Activated CD8-positive, alpha-beta T cell treated with anti-CD3 and anti-CD28 coated beads for 36 hours (primary cell): ENCODE measurements at regions of chr1 and their contacts with region 1.

Region 1: GRCh38 chr1:184881941-184882913 is 92.1 kb downstream of the NIBAN1 start:
- DNase-seq: peak; percentile 20
- ATAC-seq: peak; percentile 73
- H3K4me3 Mint-ChIP-seq: no peak overlapping the region
- H3K27ac Mint-ChIP-seq: peak overlapping the region; percentile 80
- H3K4me1 Mint-ChIP-seq: peaks cover 27% of the 10 kb centered on the region
- H3K27me3 Mint-ChIP-seq: peaks cover 4% of the 10 kb centered on the region
- CTCF ChIP-seq: no peak

Region 2: DNA sequence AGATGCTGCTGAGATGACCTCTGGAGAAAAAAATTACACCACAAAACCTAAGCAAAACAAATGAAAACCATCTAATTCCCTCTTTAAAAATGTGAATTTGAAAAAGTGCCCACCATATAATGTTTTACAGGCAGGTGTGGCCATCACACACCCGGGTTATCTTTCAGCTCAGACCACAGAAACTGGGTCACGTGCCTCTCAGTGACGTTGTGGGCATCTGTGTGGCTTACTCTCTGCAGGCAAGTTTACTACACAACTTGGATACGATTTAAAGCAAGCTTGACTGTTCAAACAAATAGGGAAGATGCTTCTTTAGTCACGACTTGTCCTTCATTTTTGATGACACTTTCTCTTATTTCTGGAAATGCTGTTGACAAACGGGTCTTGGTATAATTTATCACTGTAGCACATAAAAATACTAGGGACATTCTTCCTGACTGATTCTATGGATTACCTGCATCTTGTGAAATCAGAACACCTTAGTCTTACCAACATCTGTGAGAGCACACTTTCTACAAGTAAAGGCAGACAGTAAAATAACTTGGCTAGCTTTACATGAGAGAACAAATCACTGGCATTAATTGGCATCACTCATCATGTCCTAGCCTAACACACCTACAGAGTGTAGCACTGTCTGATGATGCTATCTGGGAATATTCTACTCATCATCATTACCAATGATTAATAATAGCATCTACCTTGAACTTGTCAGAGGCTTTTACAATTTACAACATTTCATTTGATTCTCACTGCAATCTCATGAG is 38.3 kb before region 1 on chr1:
- CTCF ChIA-PET with region 1: no interaction called
- POLR2A ChIA-PET with region 1: no interaction called
- intact Hi-C with region 1: no loop called
- DNase-seq: peak; percentile 70
- ATAC-seq: peak; percentile 70
- H3K4me3 Mint-ChIP-seq: no peak overlapping the region
- H3K27ac Mint-ChIP-seq: no peak overlapping the region
- H3K4me1 Mint-ChIP-seq: peaks cover 23% of the 10 kb centered on the region
- H3K27me3 Mint-ChIP-seq: no peaks in the 10 kb centered on the region
- CTCF ChIP-seq: no peak

Region 3: GRCh38 chr1:184866991-184867788 is 15.0 kb before region 1 on chr1:
- CTCF ChIA-PET with region 1: interaction called, 4 read pairs
- POLR2A ChIA-PET with region 1: interaction called, 4 read pairs
- intact Hi-C with region 1: loop called (anchors 2 kb)
- DNase-seq: peak; percentile 83
- ATAC-seq: peak; percentile 90
- H3K4me3 Mint-ChIP-seq: peak overlapping the region; percentile 34
- H3K27ac Mint-ChIP-seq: peak overlapping the region; percentile 94
- H3K4me1 Mint-ChIP-seq: peaks cover 43% of the 10 kb centered on the region
- H3K27me3 Mint-ChIP-seq: peaks cover 2% of the 10 kb centered on the region
- CTCF ChIP-seq: no peak

Region 4: DNA sequence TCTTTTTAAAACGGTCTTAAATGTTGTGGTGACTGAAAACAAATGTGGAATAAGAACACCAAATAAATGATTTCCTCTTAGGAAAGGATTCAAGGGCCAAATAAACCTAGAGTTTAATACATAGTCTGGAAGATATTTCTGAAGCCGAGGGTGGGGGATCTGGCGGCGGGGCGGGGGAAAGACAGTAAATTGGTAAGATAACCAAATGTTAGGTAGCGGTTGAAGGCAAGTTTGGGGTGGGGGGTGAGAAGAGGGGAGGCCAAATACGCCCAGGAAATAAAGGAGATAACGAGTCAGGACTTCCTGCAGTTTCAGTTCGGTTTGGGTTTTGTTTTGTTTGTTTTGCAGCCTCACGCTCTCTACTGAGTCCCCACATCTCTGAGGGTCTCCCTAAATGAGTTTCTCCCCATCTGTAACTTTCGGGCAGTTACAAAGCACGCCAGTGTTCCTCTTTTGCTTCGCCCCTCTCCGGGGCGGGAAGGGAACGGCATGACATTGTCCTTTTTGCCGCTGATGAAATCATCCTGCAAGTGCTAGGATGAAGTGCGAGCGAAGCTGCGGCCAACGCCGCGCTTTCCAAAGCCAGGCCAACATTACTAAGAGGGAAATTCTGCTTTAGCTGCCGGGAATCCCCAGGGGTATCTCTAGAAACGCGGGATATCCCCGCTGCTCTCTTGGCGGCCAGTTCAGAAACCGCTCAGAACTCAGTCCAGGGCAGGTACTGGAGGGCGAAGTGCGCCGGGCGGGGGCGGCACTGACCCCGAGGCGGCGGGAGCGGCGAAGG is 91.2 kb after region 1 on chr1:
- CTCF ChIA-PET with region 1: no interaction called
- POLR2A ChIA-PET with region 1: interaction called, 7 read pairs
- intact Hi-C with region 1: loop called (anchors 2 kb)
- DNase-seq: peak; percentile 80
- ATAC-seq: peak; percentile 65
- H3K4me3 Mint-ChIP-seq: peak overlapping the region; percentile 80
- H3K27ac Mint-ChIP-seq: peak overlapping the region; percentile 98
- H3K4me1 Mint-ChIP-seq: peaks cover 51% of the 10 kb centered on the region
- H3K27me3 Mint-ChIP-seq: peaks cover 20% of the 10 kb centered on the region
- CTCF ChIP-seq: no peak